Endothelial cell of umbilical vein (primary cell): ENCODE measurements at regions of chr1 and their contacts with region 1.

Region 1: DNA sequence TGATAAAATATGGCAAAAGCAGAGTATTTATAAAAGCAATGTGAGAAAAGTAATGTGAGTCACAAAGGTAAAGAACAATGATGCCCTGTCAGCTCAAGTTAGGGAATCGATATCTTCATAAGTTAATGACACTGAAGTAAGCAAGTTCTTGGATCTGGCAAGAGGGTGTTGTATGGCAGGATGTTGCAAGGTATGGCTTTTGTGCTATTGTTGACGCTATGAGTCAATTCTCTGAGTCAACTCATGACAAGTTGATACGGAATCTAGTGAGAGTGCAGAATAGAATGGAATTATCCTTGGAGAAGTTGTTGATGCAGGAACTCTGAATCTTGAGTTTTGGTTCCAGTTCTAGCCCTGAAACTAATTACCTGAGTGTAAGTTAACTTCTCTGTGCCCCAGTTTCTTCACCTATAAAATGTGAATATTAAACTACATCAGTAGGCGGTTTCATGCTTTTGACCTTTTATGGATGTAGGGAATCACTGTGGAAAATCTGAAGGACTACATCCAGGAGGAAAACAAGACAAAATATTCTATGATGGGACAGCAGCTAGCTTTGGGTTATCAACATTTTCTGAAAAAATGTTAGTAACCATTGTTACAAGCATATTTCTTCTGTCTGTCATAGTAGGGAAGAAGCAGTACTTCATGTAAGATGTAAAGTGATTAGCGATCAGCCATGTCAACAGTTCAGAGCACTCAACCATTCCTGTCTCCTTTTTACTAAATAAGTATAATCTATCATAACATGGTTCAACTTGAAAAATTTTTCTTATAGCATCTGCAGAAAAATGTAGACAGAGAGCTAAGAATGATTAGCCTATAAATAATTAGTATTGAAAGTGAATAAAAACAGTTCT is 96.9 kb downstream of the ATP6V1G3 start:
- DNase-seq: peak; percentile 92
- H3K4me3 ChIP-seq: no peak overlapping the region
- H3K27ac ChIP-seq: peak overlapping the region; percentile 76
- H3K4me1 ChIP-seq: peaks cover 37% of the 10 kb centered on the region
- H3K27me3 ChIP-seq: no peaks in the 10 kb centered on the region
- CTCF ChIP-seq: no peak
- POLR2A ChIP-seq: peak; percentile 25

Region 2: DNA sequence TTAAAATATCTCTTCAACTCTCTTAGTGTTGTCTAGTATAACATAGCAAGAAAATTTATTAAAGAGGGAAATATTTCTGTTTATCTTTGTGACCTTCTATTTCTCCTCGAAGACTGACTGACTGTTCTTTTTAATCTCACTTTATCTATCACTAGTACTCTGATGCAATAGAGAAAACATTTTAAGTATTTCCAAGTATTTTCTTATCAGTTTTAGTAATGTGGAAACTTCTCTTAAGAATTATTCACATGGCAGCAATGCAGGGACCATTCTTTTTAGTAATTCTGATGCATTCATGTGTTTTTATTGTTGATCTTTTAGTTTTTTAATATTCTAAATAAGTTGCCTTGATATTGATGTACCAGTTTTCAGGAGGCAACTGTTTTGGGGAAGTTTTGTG is 171.1 kb before region 1 on chr1:
- CTCF ChIA-PET with region 1: no interaction called
- POLR2A ChIA-PET with region 1: no interaction called
- dilution Hi-C with region 1: no loop called
- intact Hi-C with region 1: loop called (anchors 1 kb)
- DNase-seq: peak; percentile 56
- H3K4me3 ChIP-seq: no peak overlapping the region
- H3K27ac ChIP-seq: peak overlapping the region; percentile 64
- H3K4me1 ChIP-seq: peaks cover 69% of the 10 kb centered on the region
- H3K27me3 ChIP-seq: no peaks in the 10 kb centered on the region
- CTCF ChIP-seq: no peak
- POLR2A ChIP-seq: peak; percentile 42

Region 3: GRCh38 chr1:198455966-198456365 is 12.4 kb after region 1 on chr1:
- CTCF ChIA-PET with region 1: no interaction called
- POLR2A ChIA-PET with region 1: no interaction called
- dilution Hi-C with region 1: no loop called
- intact Hi-C with region 1: no loop called
- DNase-seq: no peak
- H3K4me3 ChIP-seq: no peak overlapping the region
- H3K27ac ChIP-seq: no peak overlapping the region
- H3K4me1 ChIP-seq: no peaks in the 10 kb centered on the region
- H3K27me3 ChIP-seq: no peaks in the 10 kb centered on the region
- CTCF ChIP-seq: no peak
- POLR2A ChIP-seq: no peak

Region 4: DNA sequence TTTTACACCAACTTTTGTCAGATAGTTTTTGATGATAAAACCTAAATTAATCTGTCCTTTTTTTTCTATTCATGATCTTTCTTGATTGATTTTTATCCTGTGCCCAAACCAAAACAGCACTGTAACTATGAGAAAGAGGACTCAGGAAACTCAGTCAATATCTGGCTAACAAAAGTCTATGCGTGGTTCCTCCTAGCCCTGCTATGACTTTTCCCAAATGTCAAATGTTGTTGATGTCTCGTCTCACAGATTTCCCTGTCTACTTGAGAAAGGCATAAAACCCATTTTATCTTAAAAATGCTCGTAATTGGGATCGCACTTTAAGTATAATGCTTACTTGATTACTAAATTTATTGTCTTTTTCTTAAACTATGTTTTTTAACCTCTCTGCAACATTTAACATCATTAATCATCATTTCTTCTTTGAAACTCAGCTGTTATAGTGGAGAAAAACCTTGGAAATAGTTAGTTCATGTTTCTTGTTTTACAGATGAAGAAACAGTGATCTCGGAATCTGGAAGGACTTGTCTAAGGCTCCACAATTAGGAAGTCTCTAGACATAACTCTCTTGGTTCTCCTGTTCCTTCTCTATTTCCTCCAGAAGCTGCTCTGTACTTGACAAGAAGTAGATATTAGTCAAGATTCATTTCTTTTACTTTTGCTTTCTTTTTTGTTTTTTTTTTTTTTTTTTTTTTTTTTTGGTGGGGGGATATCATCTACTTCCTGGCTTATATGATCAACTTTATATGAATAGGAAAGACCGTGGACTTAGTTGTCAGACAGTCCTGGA is 169.1 kb after region 1 on chr1:
- CTCF ChIA-PET with region 1: no interaction called
- POLR2A ChIA-PET with region 1: no interaction called
- dilution Hi-C with region 1: no loop called
- intact Hi-C with region 1: no loop called
- DNase-seq: no peak
- H3K4me3 ChIP-seq: no peak overlapping the region
- H3K27ac ChIP-seq: no peak overlapping the region
- H3K4me1 ChIP-seq: no peaks in the 10 kb centered on the region
- H3K27me3 ChIP-seq: no peaks in the 10 kb centered on the region
- CTCF ChIP-seq: no peak
- POLR2A ChIP-seq: no peak